ENCODE measurements at regions of chr3 and their contacts with region 1.

Region 1: GRCh38 chr3:158539414-158540014 is 31.5 kb upstream of the MLF1 start:
- DNase-seq: peak; percentile 61
- H3K4me3 Mint-ChIP-seq: no peak overlapping the region
- H3K27ac Mint-ChIP-seq: no peak overlapping the region
- H3K4me1 Mint-ChIP-seq: no peaks in the 10 kb centered on the region
- H3K27me3 Mint-ChIP-seq: no peaks in the 10 kb centered on the region
- CTCF ChIP-seq: peak; percentile 51

Region 2: DNA sequence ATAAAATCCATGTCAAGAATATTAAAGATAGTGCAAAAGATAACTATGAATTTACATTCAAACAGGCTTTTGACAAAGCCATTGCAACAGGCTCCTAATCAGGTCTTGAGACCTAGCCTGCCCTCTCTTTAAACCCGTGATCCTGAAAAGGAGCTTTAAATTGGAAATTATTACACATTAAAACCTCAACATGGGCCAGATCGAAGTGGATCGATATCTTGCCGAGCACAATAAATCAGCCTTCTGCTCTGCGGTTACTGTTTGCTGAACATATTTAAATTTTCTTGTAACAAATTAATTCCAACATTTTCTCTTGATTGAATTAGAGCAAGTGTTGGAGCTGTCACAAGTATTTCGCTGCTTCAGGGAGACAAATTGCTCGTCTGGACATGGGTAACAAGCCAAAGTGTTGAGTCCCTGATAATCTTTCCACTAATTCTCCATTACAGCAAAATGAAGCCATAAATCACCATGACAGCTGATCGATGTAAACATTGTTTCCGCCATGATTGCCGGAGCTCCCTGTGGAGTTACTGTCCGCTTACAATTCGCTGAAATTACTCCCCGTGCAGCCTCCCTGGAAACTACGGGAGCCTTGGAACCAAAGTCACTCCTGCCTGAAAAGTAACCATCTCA is 480.9 kb before region 1 on chr3:
- CTCF ChIA-PET with region 1: no interaction called
- POLR2A ChIA-PET with region 1: no interaction called
- intact Hi-C with region 1: no loop called
- DNase-seq: no peak
- H3K4me3 Mint-ChIP-seq: no peak overlapping the region
- H3K27ac Mint-ChIP-seq: no peak overlapping the region
- H3K4me1 Mint-ChIP-seq: peaks cover 5% of the 10 kb centered on the region
- H3K27me3 Mint-ChIP-seq: no peaks in the 10 kb centered on the region
- CTCF ChIP-seq: no peak

Region 3: GRCh38 chr3:158097593-158098308 is 441.8 kb before region 1 on chr3:
- CTCF ChIA-PET with region 1: no interaction called
- POLR2A ChIA-PET with region 1: no interaction called
- intact Hi-C with region 1: loop called (anchors 10 kb)
- DNase-seq: peak; percentile 74
- H3K4me3 Mint-ChIP-seq: peak overlapping the region; percentile 84
- H3K27ac Mint-ChIP-seq: peak overlapping the region; percentile 58
- H3K4me1 Mint-ChIP-seq: peaks cover 6% of the 10 kb centered on the region
- H3K27me3 Mint-ChIP-seq: no peaks in the 10 kb centered on the region
- CTCF ChIP-seq: no peak

Region 4: DNA sequence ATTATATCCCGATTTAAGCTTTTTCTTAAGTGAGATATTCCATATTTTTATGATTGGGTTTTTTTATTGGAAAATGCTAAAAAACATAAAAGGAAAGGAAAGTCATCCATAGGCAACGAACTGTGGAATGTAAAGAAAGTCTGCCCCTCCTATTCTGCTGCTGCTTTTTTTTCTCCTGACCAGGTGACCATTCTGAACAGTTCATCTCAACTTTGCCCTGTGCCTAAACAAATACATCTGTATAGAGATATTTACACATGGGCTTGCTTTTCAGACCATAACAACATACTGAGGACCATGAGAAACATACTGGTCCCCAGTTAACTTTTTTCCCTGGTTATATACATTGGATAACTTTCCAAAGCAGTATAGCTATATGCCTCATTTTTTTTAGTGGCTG is 12.6 kb after region 1 on chr3:
- CTCF ChIA-PET with region 1: interaction called, 25 read pairs
- POLR2A ChIA-PET with region 1: no interaction called
- intact Hi-C with region 1: no loop called
- DNase-seq: no peak
- H3K4me3 Mint-ChIP-seq: no peak overlapping the region
- H3K27ac Mint-ChIP-seq: no peak overlapping the region
- H3K4me1 Mint-ChIP-seq: no peaks in the 10 kb centered on the region
- H3K27me3 Mint-ChIP-seq: no peaks in the 10 kb centered on the region
- CTCF ChIP-seq: no peak

Region 5: DNA sequence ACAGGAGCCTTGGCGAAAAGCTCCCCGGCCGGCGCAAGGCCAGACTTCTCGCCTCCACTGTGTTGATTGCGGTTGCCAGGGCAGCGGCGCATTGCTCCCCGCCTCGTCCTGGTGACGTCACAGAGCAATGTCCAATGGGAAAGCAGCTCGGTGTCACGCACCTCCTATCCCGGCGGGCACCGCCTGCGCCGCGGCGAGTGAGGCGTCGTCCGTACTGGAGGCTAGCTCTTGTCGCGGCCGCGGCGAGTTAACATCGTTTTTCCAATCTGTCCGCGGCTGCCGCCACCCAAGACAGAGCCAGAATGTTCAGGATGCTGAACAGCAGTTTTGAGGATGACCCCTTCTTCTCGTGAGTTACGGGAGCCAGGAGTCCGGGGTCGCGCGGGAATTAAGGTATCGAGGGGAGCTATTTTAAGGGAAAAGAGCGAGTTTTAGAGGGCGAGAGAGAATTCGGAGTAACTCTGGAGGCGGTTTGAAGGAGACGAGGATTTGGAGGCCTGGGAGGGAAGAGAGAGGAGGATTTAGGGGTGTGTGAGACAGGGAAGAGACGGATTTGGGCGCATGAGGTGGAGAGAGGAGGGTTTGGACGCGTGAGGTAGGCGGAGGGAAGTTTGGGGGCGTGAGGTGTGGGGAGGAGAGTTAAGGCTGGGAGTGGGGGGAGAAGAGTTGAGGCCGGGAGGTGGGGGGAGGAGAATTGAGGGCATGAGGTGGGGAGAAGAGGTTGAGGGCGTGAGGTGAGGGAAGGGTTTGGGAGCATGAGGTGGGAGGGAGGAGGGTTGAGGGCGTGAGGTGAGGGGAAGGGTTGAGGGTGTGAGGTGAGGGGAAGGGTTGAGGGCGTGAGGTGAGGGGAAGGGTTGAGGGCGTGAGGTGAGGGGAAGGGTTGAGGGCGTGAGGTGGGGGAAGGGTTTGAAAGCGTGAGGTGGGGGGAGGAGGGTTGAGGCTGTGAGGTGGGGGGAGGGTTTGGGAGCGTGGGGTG is 31.8 kb after region 1 on chr3 and contains the start of gene MLF1:
- CTCF ChIA-PET with region 1: interaction called, 14 read pairs
- POLR2A ChIA-PET with region 1: no interaction called
- intact Hi-C with region 1: no loop called
- DNase-seq: peak; percentile 96
- H3K4me3 Mint-ChIP-seq: peak within 1 kb of the TSS; percentile 96
- H3K27ac Mint-ChIP-seq: peak within 1 kb of the TSS; percentile 98
- H3K4me1 Mint-ChIP-seq: peaks cover 6% of the 10 kb centered on the region
- H3K27me3 Mint-ChIP-seq: no peaks in the 10 kb centered on the region
- CTCF ChIP-seq: no peak
- total RNA-seq, gene MLF1: 5.0 and 6.8 TPM in 2 replicates

Region 6: DNA sequence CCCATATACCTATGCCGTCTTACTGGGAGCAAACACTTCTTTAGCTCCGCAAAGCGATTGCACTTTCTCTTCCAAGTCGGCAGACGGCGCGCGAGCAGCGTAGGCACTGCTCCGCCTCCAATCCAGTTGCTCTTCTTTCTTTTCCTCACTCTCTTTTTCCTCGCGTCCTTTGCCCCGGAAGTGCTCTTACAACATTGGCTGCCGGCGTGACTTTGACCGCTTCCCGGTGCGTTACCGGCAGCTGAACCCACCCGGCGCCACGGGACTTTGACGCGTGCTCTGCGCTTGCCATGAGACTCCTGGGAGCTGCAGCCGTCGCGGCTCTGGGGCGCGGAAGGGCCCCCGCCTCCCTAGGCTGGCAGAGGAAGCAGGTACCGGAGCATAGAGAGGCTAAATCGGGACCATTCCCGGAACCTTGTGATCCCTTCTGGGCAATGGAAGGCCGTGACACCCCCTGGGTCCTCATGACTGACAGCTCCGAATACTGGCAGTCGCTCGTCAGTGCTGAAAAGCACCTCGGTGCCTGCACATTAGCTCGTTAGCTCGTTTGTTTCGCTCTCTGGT is 104.9 kb after region 1 on chr3 and contains the start of gene GFM1:
- CTCF ChIA-PET with region 1: interaction called, 21 read pairs
- POLR2A ChIA-PET with region 1: interaction called, 10 read pairs
- intact Hi-C with region 1: loop called (anchors 2 kb)
- DNase-seq: peak; percentile 96
- H3K4me3 Mint-ChIP-seq: peak within 1 kb of the TSS; percentile 93
- H3K27ac Mint-ChIP-seq: peak within 1 kb of the TSS; percentile 94
- H3K4me1 Mint-ChIP-seq: peaks cover 12% of the 10 kb centered on the region
- H3K27me3 Mint-ChIP-seq: no peaks in the 10 kb centered on the region
- CTCF ChIP-seq: peak; percentile 81
- total RNA-seq, gene GFM1: 53.9 and 54.1 TPM in 2 replicates